Heart right ventricle (tissue), 16 donors: ENCODE measurements at regions of chr7 and their contacts with region 1.

Region 1: DNA sequence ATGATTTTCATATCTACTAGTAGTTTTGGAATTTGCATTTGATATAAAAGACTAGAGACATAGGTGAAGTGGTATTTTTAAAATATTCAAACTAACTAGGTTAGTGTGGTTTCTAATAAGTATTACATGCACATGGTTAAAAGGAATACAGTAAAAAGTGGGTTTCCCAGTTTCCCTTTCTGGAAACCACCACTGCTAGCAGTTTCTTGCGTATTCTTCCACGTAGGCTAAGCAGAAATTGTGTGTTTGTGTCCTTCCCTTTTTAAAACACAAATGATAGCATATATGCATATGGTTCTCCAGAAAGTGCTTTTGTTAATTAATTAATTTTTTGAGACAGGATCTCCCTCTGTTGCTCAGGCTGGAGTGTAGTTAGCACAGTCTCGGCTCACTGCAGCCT is 15.4 kb downstream of the NRF1 start:
- DNase-seq: no peak
- ATAC-seq: no peak
- H3K4me3 ChIP-seq: no peak overlapping the region
- H3K27ac ChIP-seq: peak overlapping the region in 1 of 10 donors; percentile 22
- H3K4me1 ChIP-seq: peaks cover 0 to 29% (median 2%) of the 10 kb centered on the region in 9 donors
- H3K27me3 ChIP-seq: no peaks in the 10 kb centered on the region
- CTCF ChIP-seq: no peak

Region 2: DNA sequence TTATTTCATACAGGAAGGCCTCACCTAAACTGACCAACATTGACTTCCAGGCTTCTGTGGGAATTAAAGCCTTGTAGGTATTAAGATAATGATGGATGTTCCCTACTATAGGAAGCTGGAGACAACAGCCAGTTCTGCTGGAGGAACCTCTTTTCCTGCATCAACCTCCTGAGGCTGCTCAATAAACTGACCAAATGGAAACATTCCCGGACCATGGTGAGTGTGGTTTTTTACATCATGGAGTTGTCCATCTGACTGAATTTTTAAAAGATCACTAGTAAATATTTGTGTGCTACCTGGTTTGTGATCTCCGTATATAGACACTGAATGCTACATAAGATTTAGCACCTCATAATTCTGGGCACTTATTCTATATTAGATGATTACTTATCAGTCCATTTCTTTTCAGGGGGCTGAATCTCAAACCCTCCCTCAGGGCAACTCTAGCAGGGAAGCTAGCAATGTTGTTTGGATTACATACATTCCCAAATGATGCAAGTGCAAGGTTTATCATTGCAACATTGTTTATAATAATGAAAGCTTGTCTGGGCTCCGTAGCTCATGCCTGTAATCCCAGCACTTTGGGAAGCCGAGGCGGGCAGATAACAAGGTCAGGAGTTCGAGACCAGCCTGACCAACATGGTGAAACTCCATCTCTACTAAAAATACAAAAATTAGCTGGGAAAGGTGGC is 146.1 kb before region 1 on chr7:
- intact Hi-C with region 1: loop called in 2 of 10 experiments (anchors 5 to 10 kb)
- DNase-seq: no peak
- ATAC-seq: no peak
- H3K4me3 ChIP-seq: no peak overlapping the region
- H3K27ac ChIP-seq: no peak overlapping the region
- H3K4me1 ChIP-seq: no peaks in the 10 kb centered on the region
- H3K27me3 ChIP-seq: no peaks in the 10 kb centered on the region
- CTCF ChIP-seq: no peak